IMR-90 (cell line): ENCODE measurements at regions of chr1 and their contacts with region 1.

Region 1: DNA sequence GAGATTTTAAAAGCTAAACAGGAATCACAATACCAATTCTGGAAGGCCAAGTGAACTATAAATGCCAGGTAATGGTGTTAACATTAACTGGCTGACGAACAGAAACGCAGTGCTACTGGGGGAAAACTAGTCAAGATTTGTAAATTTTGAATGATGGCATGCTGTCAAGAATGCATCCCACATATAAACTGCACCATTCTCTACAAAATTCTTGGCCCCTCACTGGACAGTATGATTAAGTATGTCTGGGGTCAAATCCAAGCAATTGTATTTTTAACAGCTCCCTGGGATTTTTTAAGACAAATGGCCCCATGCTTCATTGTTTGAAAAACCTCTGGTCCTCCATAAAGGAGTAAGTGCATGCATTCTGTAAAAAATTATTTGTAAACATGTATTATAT is 73.2 kb upstream of the COA6 start:
- DNase-seq: no peak
- ATAC-seq: no peak
- H3K4me3 ChIP-seq: no peak overlapping the region
- H3K27ac ChIP-seq: no peak overlapping the region
- H3K4me1 ChIP-seq: no peaks in the 10 kb centered on the region
- H3K27me3 ChIP-seq: no peaks in the 10 kb centered on the region
- CTCF ChIP-seq: no peak
- POLR2A ChIP-seq: no peak
- RAD21 ChIP-seq: no peak

Region 2: DNA sequence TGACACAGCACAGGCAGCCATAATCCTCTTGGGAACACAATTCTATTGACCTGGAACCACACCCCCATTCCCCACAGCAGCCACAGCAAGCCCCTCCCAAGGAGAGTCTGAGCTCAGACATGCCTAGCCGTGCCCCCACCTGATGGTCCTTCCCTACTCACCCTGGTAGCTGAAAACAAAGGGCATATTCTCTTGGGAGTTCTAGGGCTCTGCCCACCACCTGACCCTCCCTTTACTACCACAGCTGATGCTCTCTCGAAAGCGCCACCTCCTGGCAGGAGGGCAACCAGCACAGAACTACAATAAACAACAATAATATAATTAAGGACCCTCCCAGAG is 111.7 kb before region 1 on chr1:
- CTCF ChIA-PET with region 1: no interaction called
- POLR2A ChIA-PET with region 1: interaction called, 13 read pairs
- dilution Hi-C with region 1: no loop called
- in situ Hi-C with region 1: no loop called
- intact Hi-C with region 1: no loop called
- DNase-seq: no peak
- ATAC-seq: no peak
- H3K4me3 ChIP-seq: no peak overlapping the region
- H3K27ac ChIP-seq: no peak overlapping the region
- H3K4me1 ChIP-seq: no peaks in the 10 kb centered on the region
- H3K27me3 ChIP-seq: no peaks in the 10 kb centered on the region
- CTCF ChIP-seq: no peak
- POLR2A ChIP-seq: no peak
- RAD21 ChIP-seq: no peak

Region 3: DNA sequence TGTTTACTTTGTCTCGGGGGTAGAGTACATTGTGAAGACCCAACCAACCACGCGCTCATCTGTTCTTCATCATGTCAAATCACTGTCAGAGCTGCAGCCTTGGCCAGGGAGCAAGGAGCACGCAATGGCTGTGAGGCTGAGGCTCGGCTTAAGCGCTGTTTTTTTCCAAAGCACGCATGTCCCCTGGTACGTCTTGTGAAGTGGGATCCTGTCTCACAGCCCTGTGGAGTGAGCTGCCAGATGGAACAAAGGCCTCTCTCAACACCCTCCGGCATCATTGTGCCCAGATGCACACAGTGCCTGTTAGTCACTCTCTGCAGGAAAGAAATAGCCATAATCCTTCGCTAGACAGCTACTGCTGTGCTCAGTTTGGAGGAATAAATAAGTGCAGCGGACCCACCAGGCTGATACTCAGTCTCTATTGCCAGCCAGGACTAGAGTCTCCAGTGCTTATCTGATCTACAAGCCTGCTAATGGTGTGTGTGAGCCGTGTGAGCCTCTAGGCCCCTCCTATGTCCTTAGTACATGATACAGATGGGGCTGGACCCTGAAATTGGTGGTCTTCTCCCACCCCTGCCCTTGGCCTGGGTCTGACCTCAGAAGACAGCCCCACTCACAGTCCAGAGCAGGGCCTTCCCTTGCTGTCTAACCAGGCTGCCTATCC is 18.1 kb before region 1 on chr1:
- CTCF ChIA-PET with region 1: no interaction called
- POLR2A ChIA-PET with region 1: no interaction called
- dilution Hi-C with region 1: no loop called
- in situ Hi-C with region 1: no loop called
- intact Hi-C with region 1: no loop called
- DNase-seq: no peak
- ATAC-seq: no peak
- H3K4me3 ChIP-seq: no peak overlapping the region
- H3K27ac ChIP-seq: no peak overlapping the region
- H3K4me1 ChIP-seq: no peaks in the 10 kb centered on the region
- H3K27me3 ChIP-seq: no peaks in the 10 kb centered on the region
- CTCF ChIP-seq: no peak
- POLR2A ChIP-seq: no peak
- RAD21 ChIP-seq: no peak